H1 (cell line): ENCODE measurements at regions of chr10 and their contacts with region 1.

Region 1: DNA sequence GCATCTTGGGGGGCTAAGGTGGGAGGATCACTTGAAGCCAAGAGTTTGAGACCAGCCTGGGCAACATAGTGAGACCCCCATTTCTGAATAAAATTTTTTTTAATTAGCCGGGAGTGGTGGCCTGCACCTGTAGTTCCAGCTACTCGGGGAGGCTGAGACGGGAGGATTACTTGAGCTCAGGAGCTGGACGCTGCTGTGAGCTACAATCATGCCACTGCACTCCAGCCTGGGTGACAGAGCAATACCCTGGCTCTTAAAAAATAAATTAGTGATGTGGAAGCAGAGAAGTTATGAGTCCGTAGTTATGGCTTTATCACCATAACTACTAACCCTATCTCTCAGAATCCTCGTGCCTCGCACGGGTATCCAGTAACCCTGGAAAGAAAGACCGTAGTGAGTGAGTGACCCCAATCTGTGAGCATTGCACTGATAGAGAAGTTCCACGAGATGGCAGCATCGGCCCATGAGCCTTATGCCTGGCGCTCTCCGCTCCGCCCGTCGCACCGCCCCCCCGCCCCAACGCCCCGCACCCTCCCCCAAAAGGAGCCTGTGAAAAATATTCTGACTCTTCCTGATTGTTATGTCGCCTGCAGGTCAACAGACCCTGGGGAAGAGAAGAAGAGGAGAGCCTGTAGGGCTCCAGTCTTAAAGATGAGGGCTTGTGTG is 4.9 kb upstream of the SLC29A3 start:
- DNase-seq: peak; percentile 9 to 73
- H3K4me3 ChIP-seq: peak overlapping the region; percentile 5 to 55 (median 18); a peak in 4 of 8 replicates
- H3K27ac ChIP-seq: no peak overlapping the region
- H3K4me1 ChIP-seq: peaks cover 2 to 5% (median 3%) of the 10 kb centered on the region in 4 experiments; a peak in 4 of 7 replicates
- H3K27me3 ChIP-seq: peaks cover 0 to 12% (median 3%) of the 10 kb centered on the region in 4 experiments; a peak in 4 of 7 replicates
- CTCF ChIP-seq: peak; percentile 69 to 81 (median 79)
- EP300 ChIP-seq: no peak
- POLR2A ChIP-seq: no peak
- RAD21 ChIP-seq: peak; percentile 84 to 85

Region 2: DNA sequence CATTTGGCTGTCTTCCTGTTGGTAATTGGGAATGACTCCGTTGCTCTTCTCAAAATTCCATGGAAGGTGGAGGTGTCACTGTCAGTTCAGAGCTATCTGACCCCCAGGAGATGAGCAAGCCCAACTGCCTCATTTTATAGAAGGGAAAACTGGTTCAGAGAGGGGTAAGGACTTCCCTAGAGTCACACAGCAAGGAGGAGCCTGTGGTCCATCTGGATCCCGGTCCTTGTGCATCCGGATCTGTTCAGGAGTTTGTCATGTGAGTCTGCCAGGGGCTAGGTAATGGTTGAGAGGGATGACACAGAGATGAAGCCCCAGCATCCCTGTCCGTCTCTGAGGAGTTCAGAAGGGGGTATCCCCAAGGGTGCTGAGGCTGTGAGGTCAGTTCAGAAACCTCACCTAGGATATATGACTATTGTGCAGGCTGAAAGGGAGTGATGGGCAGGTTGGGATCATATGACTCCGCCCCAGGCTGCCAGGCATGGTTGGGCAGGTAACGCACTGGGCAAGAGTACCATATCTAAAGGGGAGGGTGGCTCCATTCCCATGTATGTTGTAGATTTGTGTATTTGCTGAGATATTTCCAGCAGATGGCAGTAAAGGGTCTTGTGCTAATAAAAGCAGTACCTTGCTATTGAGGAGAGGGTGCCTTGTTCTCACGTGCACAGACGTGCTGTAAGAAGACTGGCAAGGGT is 11.1 kb before region 1 on chr10:
- CTCF ChIA-PET with region 1: interaction called, 32 read pairs
- POLR2A ChIA-PET with region 1: interaction called, 3 read pairs
- DNase-seq: no peak
- H3K4me3 ChIP-seq: no peak overlapping the region
- H3K27ac ChIP-seq: no peak overlapping the region
- H3K4me1 ChIP-seq: peaks cover 0 to 4% (median 0%) of the 10 kb centered on the region in 4 experiments; a peak in 3 of 7 replicates
- H3K27me3 ChIP-seq: no peaks in the 10 kb centered on the region
- CTCF ChIP-seq: peak in 2 of 3 experiments; percentile 31 to 60; a peak in 3 of 4 replicates
- EP300 ChIP-seq: no peak
- POLR2A ChIP-seq: no peak
- RAD21 ChIP-seq: peak; percentile 45 to 50

Region 3: GRCh38 chr10:71343392-71343773 is 29.2 kb after region 1 on chr10:
- CTCF ChIA-PET with region 1: interaction called, 52 read pairs
- POLR2A ChIA-PET with region 1: interaction called, 5 read pairs
- DNase-seq: no peak
- H3K4me3 ChIP-seq: no peak overlapping the region
- H3K27ac ChIP-seq: peak overlapping the region; percentile 60; the same call in 1 of the 2 replicates
- H3K4me1 ChIP-seq: peaks cover 19 to 34% (median 27%) of the 10 kb centered on the region in 4 experiments
- H3K27me3 ChIP-seq: no peaks in the 10 kb centered on the region
- CTCF ChIP-seq: no peak
- EP300 ChIP-seq: no peak
- POLR2A ChIP-seq: no peak
- RAD21 ChIP-seq: no peak

Region 4: DNA sequence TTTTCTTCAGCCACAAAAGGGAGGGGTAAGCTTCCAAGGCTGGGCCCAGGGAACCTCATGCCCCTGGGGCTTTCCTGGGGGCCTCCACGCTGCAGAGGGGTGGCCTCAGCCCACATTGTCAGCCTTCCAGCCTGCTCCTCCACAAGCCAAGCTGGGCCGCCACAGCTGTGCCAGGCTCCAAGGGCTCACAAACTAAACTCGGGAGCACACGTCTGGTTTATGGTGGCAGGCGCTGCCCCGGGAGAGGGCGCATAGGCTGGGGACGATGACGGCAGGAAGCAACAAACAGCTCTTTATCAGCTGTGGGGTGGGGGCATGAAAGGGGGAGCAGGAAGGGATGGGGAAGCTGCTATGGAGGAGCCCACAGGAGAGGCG is 76.3 kb after region 1 on chr10:
- CTCF ChIA-PET with region 1: interaction called, 401 read pairs
- POLR2A ChIA-PET with region 1: no interaction called
- DNase-seq: no peak
- H3K4me3 ChIP-seq: no peak overlapping the region
- H3K27ac ChIP-seq: no peak overlapping the region
- H3K4me1 ChIP-seq: peaks cover 0 to 3% (median 0%) of the 10 kb centered on the region in 4 experiments; a peak in 1 of 7 replicates
- H3K27me3 ChIP-seq: peaks cover 0 to 12% (median 7%) of the 10 kb centered on the region in 4 experiments; a peak in 4 of 7 replicates
- CTCF ChIP-seq: no peak
- EP300 ChIP-seq: no peak
- POLR2A ChIP-seq: no peak
- RAD21 ChIP-seq: no peak

Region 5: DNA sequence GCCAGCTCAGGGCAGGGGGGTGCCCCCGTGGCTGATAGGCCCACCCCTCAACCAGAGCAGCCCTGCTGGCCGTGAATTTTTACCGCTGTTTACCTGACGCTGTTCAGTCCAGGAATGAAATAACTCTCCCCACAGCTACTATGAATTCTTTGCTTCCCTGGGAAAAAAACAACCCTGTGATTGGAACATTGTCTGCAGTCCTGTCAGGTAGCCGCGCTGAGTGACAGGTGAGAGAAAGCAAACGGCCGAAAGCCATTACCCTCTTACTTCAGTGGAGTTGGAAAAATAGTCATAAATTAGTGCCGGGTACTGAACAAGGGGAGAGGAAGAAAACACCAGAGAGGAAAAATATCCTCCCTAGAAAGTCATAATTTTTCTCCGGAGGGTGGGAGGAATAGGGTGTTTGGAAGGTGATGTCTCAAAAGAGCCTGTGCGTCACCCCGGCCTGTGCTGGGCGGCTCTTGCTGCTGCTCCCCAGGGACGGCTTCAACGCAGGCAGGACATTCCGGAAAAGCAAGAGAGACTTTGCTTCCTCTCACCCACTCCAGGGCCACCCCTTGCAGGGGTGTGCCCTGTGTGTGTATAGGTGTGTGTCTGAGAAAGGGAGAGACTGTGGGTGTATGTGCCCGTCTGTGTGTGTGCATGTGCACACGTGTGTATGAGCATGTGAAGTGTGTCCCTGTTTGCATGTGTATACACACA is 151.5 kb after region 1 on chr10:
- CTCF ChIA-PET with region 1: interaction called, 18 read pairs
- POLR2A ChIA-PET with region 1: no interaction called
- DNase-seq: no peak
- H3K4me3 ChIP-seq: no peak overlapping the region
- H3K27ac ChIP-seq: no peak overlapping the region
- H3K4me1 ChIP-seq: peaks cover 0 to 2% (median 0%) of the 10 kb centered on the region in 4 experiments; a peak in 1 of 7 replicates
- H3K27me3 ChIP-seq: no peaks in the 10 kb centered on the region
- CTCF ChIP-seq: no peak
- EP300 ChIP-seq: no peak
- POLR2A ChIP-seq: no peak
- RAD21 ChIP-seq: no peak

Region 6: DNA sequence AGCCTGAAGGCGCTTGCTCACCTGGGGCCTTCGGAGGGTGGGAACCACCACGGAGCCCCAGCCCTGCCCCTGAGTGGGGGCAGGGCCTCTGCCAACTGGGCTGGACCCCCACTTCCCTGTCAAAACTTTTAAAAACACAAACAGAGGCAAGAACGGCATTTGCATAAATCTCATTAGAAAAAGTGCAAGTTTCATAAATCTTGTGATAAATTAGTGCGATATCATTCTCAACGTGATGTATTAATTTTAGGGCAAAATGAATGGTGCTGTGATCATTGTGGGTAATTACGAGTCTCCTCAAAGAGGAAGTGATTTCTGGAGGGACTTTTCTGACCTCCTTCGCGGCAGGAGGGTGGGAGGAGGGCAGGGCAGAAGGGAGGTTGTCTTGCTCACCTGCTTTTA is 180.8 kb after region 1 on chr10:
- CTCF ChIA-PET with region 1: interaction called, 11 read pairs
- POLR2A ChIA-PET with region 1: no interaction called
- DNase-seq: no peak
- H3K4me3 ChIP-seq: no peak overlapping the region
- H3K27ac ChIP-seq: no peak overlapping the region
- H3K4me1 ChIP-seq: peaks cover 0 to 4% (median 1%) of the 10 kb centered on the region in 4 experiments; a peak in 1 of 7 replicates
- H3K27me3 ChIP-seq: peaks cover 0 to 33% (median 23%) of the 10 kb centered on the region in 4 experiments; a peak in 6 of 7 replicates
- CTCF ChIP-seq: no peak
- EP300 ChIP-seq: no peak
- POLR2A ChIP-seq: no peak
- RAD21 ChIP-seq: no peak